HEK293 (cell line): ENCODE measurements at regions of chr6 and their contacts with region 1.

Region 1: GRCh38 chr6:56542364-56543331 is 100.0 kb downstream of the DST start:
- H3K4me3 ChIP-seq: peak overlapping the region; percentile 53
- H3K27ac ChIP-seq: peak overlapping the region; percentile 95
- H3K4me1 ChIP-seq: peaks cover 28% of the 10 kb centered on the region
- CTCF ChIP-seq: peak; percentile 92

Region 2: GRCh38 chr6:56555438-56555872 is 12.8 kb after region 1 on chr6:
- CTCF ChIA-PET with region 1: interaction called, 6 read pairs
- POLR2A ChIA-PET with region 1: interaction called, 17 read pairs
- H3K4me3 ChIP-seq: no peak overlapping the region
- H3K27ac ChIP-seq: no peak overlapping the region
- H3K4me1 ChIP-seq: peaks cover 55% of the 10 kb centered on the region
- CTCF ChIP-seq: no peak

Region 3: DNA sequence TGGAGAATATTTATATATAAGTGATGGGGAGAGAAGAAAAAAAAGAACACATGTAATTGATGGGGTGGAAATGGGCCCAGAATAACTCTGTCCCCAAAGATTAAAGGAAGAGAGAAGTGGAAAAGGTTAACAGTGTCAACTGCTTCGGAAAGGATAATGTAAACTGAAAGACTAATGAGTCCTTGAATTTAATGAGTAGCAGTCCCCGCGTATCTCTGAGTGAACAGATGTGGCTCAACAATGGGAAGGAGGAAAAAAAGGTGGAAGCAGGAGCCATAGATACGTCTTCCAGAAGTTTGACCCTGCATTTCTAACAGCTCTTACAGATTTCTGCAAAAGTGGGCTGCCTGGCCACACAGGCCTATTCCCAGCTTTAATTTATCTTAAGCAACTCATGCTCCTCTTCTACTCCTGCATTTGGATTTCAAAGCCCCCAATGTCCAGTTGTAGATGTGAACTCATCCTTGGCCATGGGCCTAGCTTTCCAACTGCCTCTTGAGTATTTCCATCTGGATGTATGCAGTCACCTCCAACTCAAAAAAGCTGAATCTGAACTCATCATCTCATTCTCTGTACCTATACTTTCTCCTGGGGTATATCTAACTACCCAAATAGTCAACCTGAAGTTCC is 38.8 kb after region 1 on chr6:
- CTCF ChIA-PET with region 1: no interaction called
- POLR2A ChIA-PET with region 1: interaction called, 12 read pairs
- H3K4me3 ChIP-seq: no peak overlapping the region
- H3K27ac ChIP-seq: no peak overlapping the region
- H3K4me1 ChIP-seq: no peaks in the 10 kb centered on the region
- CTCF ChIP-seq: no peak